ENCODE measurements at regions of chr3 and their contacts with region 1.

Region 1: DNA sequence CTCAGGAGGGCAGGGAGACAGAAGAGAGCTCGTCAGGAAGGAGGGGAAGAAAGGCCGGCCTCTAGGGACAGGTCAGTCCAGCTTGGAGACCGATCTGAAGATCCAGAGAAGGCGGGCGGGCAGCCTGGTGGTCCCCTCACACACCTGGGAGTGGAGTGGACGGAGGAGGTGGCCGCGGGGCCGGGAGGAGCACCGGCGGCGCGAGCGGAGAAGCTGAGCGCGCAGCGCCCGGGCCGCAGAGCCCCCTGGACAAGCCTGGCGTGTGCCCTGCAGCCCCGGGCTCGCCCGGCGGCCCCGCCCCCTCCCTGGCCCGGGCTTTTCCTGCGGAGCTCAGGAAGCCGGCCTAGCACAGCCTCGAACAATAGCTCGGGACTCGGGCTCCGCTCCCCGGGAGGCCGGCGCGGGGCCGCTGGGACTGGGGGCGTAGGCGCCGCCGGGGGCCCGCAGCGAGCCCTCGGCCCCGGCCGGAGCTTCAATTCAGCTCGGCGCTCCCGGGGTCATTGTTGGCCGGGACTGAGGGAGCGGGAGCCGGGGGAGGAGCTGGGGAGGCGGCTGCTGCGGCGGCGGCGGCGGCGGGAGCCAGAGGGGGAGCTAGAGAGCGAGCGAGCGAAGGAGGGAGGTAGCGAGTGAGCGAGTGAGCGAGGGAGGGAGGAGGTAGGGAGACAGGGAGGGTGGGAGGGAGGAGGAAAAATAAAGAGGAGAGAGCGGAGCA is 40.9 kb upstream of the ROPN1 start:
- DNase-seq: peak; percentile 78
- H3K4me3 ChIP-seq: peak overlapping the region; percentile 64 to 78
- H3K27ac ChIP-seq: peak overlapping the region; percentile 75 to 83
- H3K4me1 ChIP-seq: no peaks in the 10 kb centered on the region
- H3K27me3 ChIP-seq: no peaks in the 10 kb centered on the region
- CTCF ChIP-seq: peak; percentile 27 to 62 (median 56)
- POLR2A ChIP-seq: no peak

Region 2: GRCh38 chr3:124078953-124079911 is 46.4 kb after region 1 on chr3:
- intact Hi-C with region 1: loop called (anchors 5 kb)
- DNase-seq: peak; percentile 39
- H3K4me3 ChIP-seq: no peak overlapping the region
- H3K27ac ChIP-seq: no peak overlapping the region
- H3K4me1 ChIP-seq: no peaks in the 10 kb centered on the region
- H3K27me3 ChIP-seq: no peaks in the 10 kb centered on the region
- CTCF ChIP-seq: peak; percentile 65 to 86 (median 74)
- POLR2A ChIP-seq: no peak

Region 3: GRCh38 chr3:124281453-124282316 is 248.9 kb after region 1 on chr3:
- intact Hi-C with region 1: loop called (anchors 5 kb)
- DNase-seq: no peak
- H3K4me3 ChIP-seq: no peak overlapping the region
- H3K27ac ChIP-seq: no peak overlapping the region
- H3K4me1 ChIP-seq: no peaks in the 10 kb centered on the region
- H3K27me3 ChIP-seq: no peaks in the 10 kb centered on the region
- CTCF ChIP-seq: peak in 2 of 4 experiments; percentile 41 to 43
- POLR2A ChIP-seq: no peak

Region 4: GRCh38 chr3:125011941-125012340 is 979.1 kb after region 1 on chr3:
- intact Hi-C with region 1: no loop called
- DNase-seq: no peak
- H3K4me3 ChIP-seq: no peak overlapping the region
- H3K27ac ChIP-seq: no peak overlapping the region
- H3K4me1 ChIP-seq: no peaks in the 10 kb centered on the region
- H3K27me3 ChIP-seq: no peaks in the 10 kb centered on the region
- CTCF ChIP-seq: no peak
- POLR2A ChIP-seq: no peak